ENCODE measurements at regions of chr3 and their contacts with region 1.

Region 1: DNA sequence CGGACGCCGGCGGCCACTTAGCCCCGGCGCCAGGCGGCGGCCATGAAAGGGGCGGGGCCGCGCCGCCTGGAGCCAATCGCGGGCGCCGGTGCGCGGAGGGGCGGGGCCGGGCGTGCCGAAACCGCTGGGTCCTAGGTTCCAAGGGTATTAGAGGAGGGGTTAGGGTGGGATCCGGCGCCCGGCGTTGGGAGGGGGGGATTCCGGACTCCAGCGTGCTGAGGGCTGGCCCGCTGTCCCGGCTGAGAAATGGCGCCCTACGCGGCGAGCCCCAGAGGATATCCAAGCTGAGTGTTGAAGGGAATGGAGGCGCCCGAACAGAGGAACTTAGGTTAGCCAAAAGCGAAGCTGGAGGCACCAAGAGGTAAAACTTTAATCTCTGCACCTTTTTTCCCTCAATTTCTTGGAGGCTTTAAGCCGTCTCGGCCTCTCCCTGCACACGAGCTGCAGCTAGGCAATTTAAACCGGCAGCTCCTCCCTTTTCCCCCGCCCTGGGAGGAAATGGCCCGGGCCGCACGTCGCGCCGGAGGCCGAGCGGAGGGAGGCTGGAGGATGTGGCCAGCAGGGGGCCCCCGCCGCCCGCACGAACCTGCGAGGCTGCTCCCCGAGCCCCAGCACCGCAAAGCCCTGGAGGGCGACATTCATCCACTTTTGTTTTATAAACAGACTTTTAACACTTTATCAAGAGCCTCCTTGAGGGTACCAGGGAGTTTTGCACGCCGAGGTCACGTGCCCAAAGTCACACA is at the start of gene XXYLT1:
- DNase-seq: peak; percentile 95
- H3K4me3 Mint-ChIP-seq: peak within 1 kb of the TSS; percentile 83
- H3K27ac Mint-ChIP-seq: no peak within 1 kb of the TSS
- H3K4me1 Mint-ChIP-seq: peaks cover 20% of the 10 kb centered on the region
- H3K27me3 Mint-ChIP-seq: no peaks in the 10 kb centered on the region
- total RNA-seq, gene XXYLT1: 1.8 to 2.5 TPM

Region 2: GRCh38 chr3:195259475-195260279 is 11.6 kb before region 1 on chr3:
- CTCF ChIA-PET with region 1: interaction called, 28 read pairs
- intact Hi-C with region 1: no loop called
- DNase-seq: peak; percentile 79
- H3K4me3 Mint-ChIP-seq: peak overlapping the region; percentile 55
- H3K27ac Mint-ChIP-seq: no peak overlapping the region
- H3K4me1 Mint-ChIP-seq: peaks cover 13% of the 10 kb centered on the region
- H3K27me3 Mint-ChIP-seq: no peaks in the 10 kb centered on the region

Region 3: GRCh38 chr3:195366200-195366925 is 95.1 kb after region 1 on chr3:
- CTCF ChIA-PET with region 1: no interaction called
- intact Hi-C with region 1: no loop called
- DNase-seq: no peak
- H3K4me3 Mint-ChIP-seq: no peak overlapping the region
- H3K27ac Mint-ChIP-seq: no peak overlapping the region
- H3K4me1 Mint-ChIP-seq: peaks cover 11% of the 10 kb centered on the region
- H3K27me3 Mint-ChIP-seq: no peaks in the 10 kb centered on the region

Region 4: DNA sequence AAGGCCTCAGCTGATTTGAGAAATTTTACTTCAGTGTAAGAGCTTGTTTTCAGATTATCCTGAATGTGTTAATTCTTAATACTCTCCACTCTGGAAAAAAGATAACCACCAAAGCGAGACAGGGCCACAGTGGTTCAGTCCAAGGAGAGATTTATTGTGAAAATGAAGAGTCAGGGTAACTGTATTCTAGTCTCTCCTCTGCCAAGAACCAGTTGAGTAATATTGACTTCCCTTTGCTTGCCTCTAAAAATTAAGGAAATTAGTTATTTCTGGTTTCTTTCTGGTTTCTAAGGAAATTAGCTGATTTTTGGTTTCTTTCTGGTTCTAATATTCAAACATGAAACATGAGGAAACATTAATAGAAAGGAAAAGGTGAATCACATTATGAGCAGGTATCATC is 236.9 kb after region 1 on chr3:
- CTCF ChIA-PET with region 1: interaction called, 38 read pairs
- intact Hi-C with region 1: no loop called
- DNase-seq: no peak
- H3K4me3 Mint-ChIP-seq: no peak overlapping the region
- H3K27ac Mint-ChIP-seq: peak overlapping the region; percentile 51
- H3K4me1 Mint-ChIP-seq: peaks cover 24% of the 10 kb centered on the region
- H3K27me3 Mint-ChIP-seq: no peaks in the 10 kb centered on the region

Region 5: DNA sequence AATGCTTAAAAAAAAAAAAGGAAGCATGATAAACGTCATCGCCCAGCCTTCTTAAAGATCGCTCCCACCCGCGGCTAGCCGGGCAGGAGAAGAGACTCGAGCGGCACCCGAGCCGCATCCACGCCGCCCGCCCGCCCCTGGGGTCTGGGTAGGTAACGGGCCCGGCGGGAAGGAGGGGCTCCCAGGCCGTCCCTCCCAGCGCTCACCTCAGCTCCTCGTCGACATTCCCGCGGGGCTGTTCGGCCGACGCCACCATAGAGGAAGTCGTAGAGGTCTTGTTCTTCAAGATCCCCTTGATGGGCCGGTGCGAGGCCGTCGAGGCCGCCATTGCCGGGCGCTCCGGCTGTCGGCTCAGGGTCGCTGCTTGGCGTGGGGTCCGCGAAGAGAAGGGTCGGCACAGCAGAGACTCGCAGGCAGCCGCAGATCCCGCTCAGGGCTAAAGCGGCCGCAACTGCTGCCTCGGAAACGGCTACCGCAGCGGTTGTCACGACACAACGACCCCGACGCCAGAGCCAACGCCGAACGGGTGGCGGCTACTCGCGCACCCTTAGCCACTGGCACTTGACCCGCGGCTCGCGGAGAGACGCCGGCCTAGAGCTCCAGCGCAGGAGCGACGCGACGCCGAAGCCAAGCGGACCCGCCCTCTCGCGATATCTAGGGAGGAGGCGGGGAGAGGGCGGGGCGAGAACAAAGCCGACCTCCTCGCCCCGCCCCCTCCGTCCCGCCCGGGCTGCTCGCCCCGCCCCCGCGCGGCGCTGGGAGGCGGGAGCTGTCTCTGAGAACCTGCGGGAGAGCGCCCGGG is 271.6 kb after region 1 on chr3 and contains the start of gene PPP1R2:
- CTCF ChIA-PET with region 1: interaction called, 22 read pairs
- intact Hi-C with region 1: loop called (anchors 1 kb)
- DNase-seq: peak; percentile 93
- H3K4me3 Mint-ChIP-seq: peak within 1 kb of the TSS; percentile 88
- H3K27ac Mint-ChIP-seq: peak within 1 kb of the TSS; percentile 94
- H3K4me1 Mint-ChIP-seq: peaks cover 53% of the 10 kb centered on the region
- H3K27me3 Mint-ChIP-seq: no peaks in the 10 kb centered on the region
- total RNA-seq, gene PPP1R2: 99.7 to 105 TPM

Region 6: DNA sequence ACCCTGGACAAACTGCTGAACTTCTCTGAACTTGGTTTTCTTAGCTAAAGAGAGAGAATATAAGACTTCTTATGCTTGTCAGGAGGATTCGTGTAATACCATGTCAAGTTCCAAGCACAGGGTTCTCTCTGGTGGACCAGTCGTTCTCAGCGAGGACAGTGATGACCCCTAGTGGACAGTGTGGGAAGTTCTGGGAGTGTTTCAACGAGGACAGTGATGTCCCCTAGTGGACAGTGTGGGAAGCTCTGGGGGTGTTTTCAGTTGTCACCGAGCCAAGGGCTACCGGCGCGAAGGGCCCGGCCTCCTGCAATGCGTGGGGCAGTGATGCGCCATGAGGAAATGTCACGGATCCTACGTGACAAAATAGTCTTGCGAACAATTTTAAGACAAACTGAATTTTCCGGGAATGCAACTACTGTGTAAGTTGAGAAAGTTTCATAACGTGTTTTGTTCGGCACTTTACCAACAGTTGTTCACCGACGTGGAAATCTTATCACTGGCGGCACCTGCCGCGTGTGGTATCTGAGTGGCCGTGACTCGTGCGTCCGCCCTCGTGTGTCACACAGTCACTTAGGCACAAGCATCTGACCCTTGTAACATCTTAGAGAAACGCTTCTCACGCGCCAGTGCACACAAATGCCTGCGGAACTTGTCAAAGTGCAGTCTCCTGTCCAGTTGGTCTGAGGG is 579.7 kb after region 1 on chr3:
- CTCF ChIA-PET with region 1: interaction called, 25 read pairs
- intact Hi-C with region 1: loop called (anchors 1 kb)
- DNase-seq: peak; percentile 96
- H3K4me3 Mint-ChIP-seq: peak overlapping the region; percentile 18
- H3K27ac Mint-ChIP-seq: no peak overlapping the region
- H3K4me1 Mint-ChIP-seq: peaks cover 2% of the 10 kb centered on the region
- H3K27me3 Mint-ChIP-seq: no peaks in the 10 kb centered on the region